ENCODE measurements at regions of chr12 and their contacts with region 1.

Region 1: DNA sequence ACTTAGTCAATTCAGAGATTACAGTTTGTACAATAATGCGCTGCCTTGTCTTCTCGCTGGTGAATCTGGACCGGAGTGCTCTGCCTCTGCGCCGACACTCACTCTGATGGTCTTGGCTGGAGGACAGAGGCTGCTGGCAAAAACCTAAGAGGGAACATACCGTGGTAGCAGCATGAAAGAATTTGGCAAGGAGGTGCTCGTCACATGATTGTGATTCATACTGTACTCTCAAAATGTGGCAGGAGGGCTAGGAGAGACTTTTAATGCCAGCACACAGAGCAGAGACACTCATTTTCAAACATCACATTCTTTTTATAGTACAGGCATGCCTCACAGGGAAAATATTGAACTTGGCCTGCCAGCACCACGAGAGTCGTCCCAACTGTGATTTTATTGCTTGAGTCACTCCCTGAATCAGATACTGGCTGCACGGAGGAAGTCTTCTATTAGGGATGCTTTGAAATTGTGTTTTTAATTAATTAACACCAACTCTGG is 67.8 kb downstream of the HMGA2 start:
- DNase-seq: peak; percentile 55 to 95
- H3K4me3 ChIP-seq: no peak overlapping the region
- H3K27ac ChIP-seq: peak overlapping the region in 1 of 2 donors; percentile 21
- H3K4me1 ChIP-seq: peaks cover 2 to 17% of the 10 kb centered on the region in 2 donors
- H3K27me3 ChIP-seq: peaks cover 3% of the 10 kb centered on the region
- CTCF ChIP-seq: no peak

Region 2: DNA sequence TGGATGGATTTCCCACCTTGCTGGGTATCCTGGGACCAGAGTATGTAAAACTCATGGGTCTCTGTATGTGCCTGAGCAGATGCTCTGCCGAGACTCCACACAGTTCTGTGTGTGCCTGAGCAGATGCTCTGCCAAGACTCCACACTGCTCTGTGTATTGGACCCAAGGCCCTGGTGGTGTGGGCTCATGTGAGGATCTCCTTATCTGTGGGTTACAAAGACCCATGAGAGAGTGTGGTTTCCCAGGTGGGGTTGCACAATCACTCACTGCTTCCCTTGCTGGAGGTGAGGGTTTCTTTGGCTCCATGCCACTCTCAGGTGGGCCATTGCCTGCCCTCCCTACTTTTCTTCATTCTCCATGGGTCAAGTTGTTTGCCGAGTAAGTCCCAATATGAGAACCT is 926.1 kb before region 1 on chr12:
- intact Hi-C with region 1: no loop called
- DNase-seq: no peak
- H3K4me3 ChIP-seq: no peak overlapping the region
- H3K27ac ChIP-seq: no peak overlapping the region
- H3K4me1 ChIP-seq: no peaks in the 10 kb centered on the region
- H3K27me3 ChIP-seq: no peaks in the 10 kb centered on the region
- CTCF ChIP-seq: no peak

Region 3: GRCh38 chr12:65602610-65603295 is 289.3 kb before region 1 on chr12:
- intact Hi-C with region 1: loop called (anchors 5 kb)
- DNase-seq: peak; percentile 10 to 82
- H3K4me3 ChIP-seq: peak overlapping the region in 1 of 2 donors; percentile 47
- H3K27ac ChIP-seq: peak overlapping the region; percentile 35 to 47
- H3K4me1 ChIP-seq: peaks cover 3 to 4% of the 10 kb centered on the region in 2 donors
- H3K27me3 ChIP-seq: no peaks in the 10 kb centered on the region
- CTCF ChIP-seq: peak; percentile 71 to 77 (median 76)

Region 4: GRCh38 chr12:65853489-65854370 is 38.3 kb before region 1 on chr12:
- intact Hi-C with region 1: no loop called
- DNase-seq: no peak
- H3K4me3 ChIP-seq: no peak overlapping the region
- H3K27ac ChIP-seq: no peak overlapping the region
- H3K4me1 ChIP-seq: no peaks in the 10 kb centered on the region
- H3K27me3 ChIP-seq: no peaks in the 10 kb centered on the region
- CTCF ChIP-seq: no peak

Region 5: GRCh38 chr12:65881965-65882413 is 10.0 kb before region 1 on chr12:
- intact Hi-C with region 1: loop called (anchors 1 kb)
- DNase-seq: peak; percentile 33 to 85
- H3K4me3 ChIP-seq: peak overlapping the region; percentile 50 to 51
- H3K27ac ChIP-seq: peak overlapping the region; percentile 2 to 56
- H3K4me1 ChIP-seq: peaks cover 5 to 13% of the 10 kb centered on the region in 2 donors
- H3K27me3 ChIP-seq: no peaks in the 10 kb centered on the region
- CTCF ChIP-seq: peak in 1 of 3 experiments; percentile 14

Region 6: DNA sequence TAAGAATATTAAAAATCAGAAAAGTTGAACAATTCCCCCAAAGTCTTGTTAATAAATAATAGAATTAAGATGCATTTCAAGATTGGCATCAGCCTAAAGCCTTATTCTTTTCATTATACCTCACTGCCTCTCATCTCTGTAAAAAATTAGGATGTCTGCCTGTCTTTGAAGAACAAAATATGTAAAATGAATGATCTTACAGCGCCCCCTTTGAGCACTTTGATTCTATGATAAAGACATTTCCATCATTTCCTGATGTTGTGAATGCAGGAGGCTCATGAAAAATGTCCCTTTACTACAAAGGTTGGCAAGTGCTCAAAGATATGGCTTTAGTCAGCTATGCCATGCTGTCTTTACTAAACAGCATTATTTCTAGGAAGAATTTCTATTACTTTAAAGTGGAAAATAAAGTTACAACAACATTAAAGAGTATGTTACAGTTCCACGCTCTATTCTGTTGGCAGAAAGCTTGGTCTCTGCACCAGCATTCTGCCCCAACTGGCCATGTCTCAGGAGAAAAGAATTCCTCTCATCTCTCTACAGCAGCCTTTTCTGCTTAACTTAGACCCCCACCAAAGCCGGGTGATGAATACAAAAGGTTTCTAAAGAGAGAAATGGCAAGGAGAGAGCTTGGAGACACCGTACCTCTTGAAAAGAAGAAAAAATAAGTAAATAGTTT is 143.4 kb after region 1 on chr12:
- intact Hi-C with region 1: loop called (anchors 2 kb)
- DNase-seq: no peak
- H3K4me3 ChIP-seq: no peak overlapping the region
- H3K27ac ChIP-seq: peak overlapping the region; percentile 76 to 77
- H3K4me1 ChIP-seq: peaks cover 0 to 16% of the 10 kb centered on the region in 2 donors
- H3K27me3 ChIP-seq: no peaks in the 10 kb centered on the region
- CTCF ChIP-seq: peak in 2 of 3 experiments; percentile 16 to 40

Region 7: GRCh38 chr12:66080791-66081190 is 188.8 kb after region 1 on chr12:
- intact Hi-C with region 1: no loop called
- DNase-seq: no peak
- H3K4me3 ChIP-seq: no peak overlapping the region
- H3K27ac ChIP-seq: no peak overlapping the region
- H3K4me1 ChIP-seq: no peaks in the 10 kb centered on the region
- H3K27me3 ChIP-seq: no peaks in the 10 kb centered on the region
- CTCF ChIP-seq: no peak

Region 8: GRCh38 chr12:67509666-67510384 is 1617.8 kb after region 1 on chr12:
- intact Hi-C with region 1: no loop called
- DNase-seq: no peak
- H3K4me3 ChIP-seq: no peak overlapping the region
- H3K27ac ChIP-seq: no peak overlapping the region
- H3K4me1 ChIP-seq: peaks cover 0 to 4% of the 10 kb centered on the region in 2 donors
- H3K27me3 ChIP-seq: no peaks in the 10 kb centered on the region
- CTCF ChIP-seq: no peak